Activated T-helper 2 cell treated with anti-CD3 and anti-CD28 coated beads, Interferon-gamma antibody, Interleukin-2, Interleukin-4, amounts not matched to agents 10 μg/mL and 5 μg/mL and 100 μg/mL, durations not matched to agents 14 hours and 24 hours and 36 hours (primary cell): ENCODE measurements at regions of chr11 and their contacts with region 1.

Region 1: DNA sequence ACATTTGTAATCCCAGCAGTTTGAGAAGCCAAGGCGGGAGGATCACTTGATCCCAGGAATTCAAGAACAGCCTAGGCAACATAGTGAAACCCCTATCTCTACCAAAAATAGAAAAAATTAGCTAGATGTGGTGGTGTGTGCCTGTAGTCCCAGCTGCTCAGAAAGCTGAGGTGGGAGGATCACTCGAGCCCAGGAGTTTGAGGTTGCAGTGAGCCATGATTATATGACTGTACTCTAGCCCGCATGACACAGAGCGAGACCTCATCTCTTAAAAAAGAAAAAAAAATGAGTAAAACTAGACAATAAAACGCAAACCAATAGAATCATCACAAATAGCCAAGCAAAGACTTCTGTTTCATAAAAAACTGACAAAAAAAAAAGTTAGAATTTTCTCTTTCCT is 21.8 kb downstream of the NUCB2 start:
- DNase-seq: peak; percentile 41
- H3K4me3 Mint-ChIP-seq: no peak overlapping the region
- H3K27ac Mint-ChIP-seq: peak overlapping the region; percentile 9
- H3K4me1 Mint-ChIP-seq: peaks cover 40% of the 10 kb centered on the region
- H3K27me3 Mint-ChIP-seq: no peaks in the 10 kb centered on the region

Region 2: GRCh38 chr11:17230867-17231851 is 67.1 kb before region 1 on chr11:
- intact Hi-C with region 1: loop called (anchors 1 kb)
- DNase-seq: peak; percentile 53
- H3K4me3 Mint-ChIP-seq: no peak overlapping the region
- H3K27ac Mint-ChIP-seq: peak overlapping the region; percentile 25
- H3K4me1 Mint-ChIP-seq: peaks cover 12% of the 10 kb centered on the region
- H3K27me3 Mint-ChIP-seq: peaks cover 29% of the 10 kb centered on the region

Region 3: DNA sequence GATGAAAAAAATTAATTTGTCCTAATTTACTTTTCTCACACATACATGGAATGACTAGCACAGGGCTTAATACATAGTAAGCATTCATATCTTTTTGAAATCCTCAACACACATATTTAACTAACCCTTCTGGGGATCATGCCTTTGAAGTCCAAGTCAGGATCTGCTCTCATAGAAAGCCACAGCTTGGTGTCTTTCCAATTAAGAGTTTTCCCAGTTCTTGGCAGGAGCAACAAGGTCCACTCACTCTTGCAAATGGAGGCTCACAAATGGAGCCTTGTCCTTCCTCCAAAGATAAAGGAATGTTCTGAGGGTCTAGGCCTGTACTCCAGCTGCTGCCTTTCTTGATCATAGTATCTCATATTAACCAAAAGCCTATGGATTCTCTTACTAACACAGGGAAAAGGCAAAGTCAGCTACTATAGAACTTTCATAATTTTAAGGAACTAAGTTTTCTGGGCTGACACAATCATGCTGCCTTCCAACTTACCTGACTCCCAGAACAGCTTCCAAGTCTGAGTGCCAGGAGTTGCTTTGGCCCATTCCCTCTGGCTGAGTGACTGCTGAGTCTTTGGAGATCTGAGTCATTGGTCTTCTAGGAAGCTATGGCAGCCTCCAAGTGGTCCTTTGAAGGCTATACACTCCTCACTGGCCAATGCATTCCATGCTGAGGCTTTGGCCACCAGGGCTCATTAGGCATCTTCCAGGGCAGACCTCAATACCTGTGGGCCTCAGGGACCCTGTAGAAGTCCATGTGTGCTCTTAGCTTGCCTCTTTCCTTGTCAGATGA is 47.5 kb before region 1 on chr11:
- intact Hi-C with region 1: no loop called
- DNase-seq: no peak
- H3K4me3 Mint-ChIP-seq: no peak overlapping the region
- H3K27ac Mint-ChIP-seq: no peak overlapping the region
- H3K4me1 Mint-ChIP-seq: no peaks in the 10 kb centered on the region
- H3K27me3 Mint-ChIP-seq: peaks cover 45% of the 10 kb centered on the region

Region 4: DNA sequence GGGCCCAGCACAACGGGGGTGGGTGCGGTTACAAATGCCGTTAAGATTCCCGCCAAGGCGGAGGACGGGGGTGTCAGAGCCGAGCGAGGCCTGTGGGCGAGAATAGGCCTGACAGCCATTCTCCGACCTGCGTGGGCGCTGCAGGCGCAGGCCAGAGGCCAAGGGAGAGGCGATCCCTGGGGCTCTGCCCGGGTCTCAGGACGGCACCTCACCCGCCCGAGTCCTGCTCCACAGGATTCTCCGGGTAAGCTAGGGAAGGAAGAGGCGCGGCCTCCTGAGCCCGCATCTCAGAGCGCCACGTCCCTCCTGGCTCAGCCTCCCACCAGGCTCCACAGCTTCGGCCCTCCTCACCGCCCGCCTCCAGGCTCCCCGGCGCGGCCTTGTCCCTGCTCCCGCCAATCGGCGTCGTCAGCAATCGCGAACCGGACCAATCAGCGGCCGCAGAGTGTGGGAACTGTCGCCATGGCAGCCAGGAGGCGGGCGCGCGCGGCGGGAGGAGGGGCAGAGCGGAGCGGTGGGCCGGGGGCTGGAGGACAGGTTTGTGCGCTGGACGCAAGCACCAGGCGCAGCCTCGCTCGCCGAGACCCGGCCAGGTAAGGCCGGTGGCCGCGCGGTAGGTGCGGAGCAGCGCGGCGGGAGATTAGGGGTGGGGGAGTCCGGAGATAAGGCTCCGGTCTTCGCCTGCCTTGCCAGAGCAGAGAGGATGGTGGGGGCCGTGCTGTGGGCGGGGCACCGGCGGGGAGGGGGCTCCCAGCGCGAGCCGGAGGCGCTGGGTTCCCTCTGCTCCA is 21.9 kb before region 1 on chr11 and contains the start of gene NUCB2:
- intact Hi-C with region 1: loop called (anchors 1 kb)
- DNase-seq: peak; percentile 95
- H3K4me3 Mint-ChIP-seq: peak within 1 kb of the TSS; percentile 91
- H3K27ac Mint-ChIP-seq: peak within 1 kb of the TSS; percentile 89
- H3K4me1 Mint-ChIP-seq: peaks cover 43% of the 10 kb centered on the region
- H3K27me3 Mint-ChIP-seq: peaks cover 3% of the 10 kb centered on the region
- total RNA-seq, gene NUCB2: 99.4 and 106 TPM in 2 replicates

Region 5: DNA sequence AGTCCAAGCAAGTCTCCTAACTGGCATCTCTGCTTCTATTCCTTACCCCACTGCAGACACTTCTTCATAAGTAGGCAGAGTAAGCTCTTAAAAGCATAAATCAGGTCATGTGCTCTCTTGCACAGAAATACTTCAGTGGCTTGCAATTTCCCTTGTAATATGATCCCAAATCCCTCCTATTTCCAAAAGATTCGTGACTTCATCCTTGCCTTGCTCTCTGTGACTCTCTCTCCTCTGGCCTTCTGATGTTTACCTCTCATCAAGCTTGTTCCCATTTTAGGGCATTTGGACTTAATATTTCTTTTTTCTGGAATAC is 15.9 kb after region 1 on chr11:
- intact Hi-C with region 1: loop called (anchors 2 kb)
- DNase-seq: no peak
- H3K4me3 Mint-ChIP-seq: no peak overlapping the region
- H3K27ac Mint-ChIP-seq: no peak overlapping the region
- H3K4me1 Mint-ChIP-seq: peaks cover 2% of the 10 kb centered on the region
- H3K27me3 Mint-ChIP-seq: no peaks in the 10 kb centered on the region

Region 6: GRCh38 chr11:17368176-17368950 is 70.1 kb after region 1 on chr11:
- intact Hi-C with region 1: loop called (anchors 1 kb)
- DNase-seq: no peak
- H3K4me3 Mint-ChIP-seq: no peak overlapping the region
- H3K27ac Mint-ChIP-seq: peak overlapping the region; percentile 79
- H3K4me1 Mint-ChIP-seq: peaks cover 15% of the 10 kb centered on the region
- H3K27me3 Mint-ChIP-seq: peaks cover 1% of the 10 kb centered on the region